Pancreas (tissue), 10 donors: ENCODE measurements at regions of chr22 and their contacts with region 1.

Region 1: GRCh38 chr22:19629720-19630419 is 84.4 kb upstream of the SEPTIN5 start:
- DNase-seq: peak; percentile 62 to 88 (median 80)
- ATAC-seq: peak; percentile 91 to 99 (median 98)
- H3K4me3 ChIP-seq: no peak overlapping the region
- H3K27ac ChIP-seq: no peak overlapping the region
- H3K4me1 ChIP-seq: no peaks in the 10 kb centered on the region
- H3K27me3 ChIP-seq: no peaks in the 10 kb centered on the region
- CTCF ChIP-seq: peak; percentile 69 to 90 (median 84)

Region 2: DNA sequence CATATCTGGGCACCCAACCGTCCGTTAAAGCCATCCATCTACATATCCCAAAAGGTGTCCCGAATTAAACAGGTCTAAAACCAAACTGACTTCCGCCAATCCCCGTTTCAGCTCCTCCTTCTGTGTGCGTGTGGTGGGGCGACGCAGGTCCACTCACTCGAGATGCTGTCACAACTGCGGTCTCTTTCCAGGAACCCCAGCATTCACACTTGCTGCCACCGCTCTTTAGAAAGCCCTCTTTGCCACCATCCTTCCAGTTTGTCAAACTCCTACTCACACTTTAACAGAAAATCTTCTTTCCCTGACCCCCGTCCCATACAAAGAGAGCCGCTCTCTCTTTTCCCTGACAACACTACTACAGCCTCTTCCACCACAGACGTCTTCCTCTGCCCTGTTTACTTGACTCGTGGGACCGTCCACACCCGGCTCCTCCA is 485.9 kb before region 1 on chr22:
- intact Hi-C with region 1: loop called in 1 of 3 experiments (anchors 10 kb)
- DNase-seq: peak in 1 of 6 donors; percentile 9
- ATAC-seq: peak in 2 of 4 donors; percentile 1 to 12
- H3K4me3 ChIP-seq: peak overlapping the region; percentile 55 to 94 (median 72)
- H3K27ac ChIP-seq: peak overlapping the region in 3 of 4 donors; percentile 0 to 19 (median 13)
- H3K4me1 ChIP-seq: peaks cover 0 to 6% (median 5%) of the 10 kb centered on the region in 3 donors
- H3K27me3 ChIP-seq: peaks cover 0 to 4% (median under 1%) of the 10 kb centered on the region in 4 donors
- CTCF ChIP-seq: no peak

Region 3: GRCh38 chr22:19304547-19304946 is 325.3 kb before region 1 on chr22:
- intact Hi-C with region 1: loop called in 1 of 3 experiments (anchors 10 kb)
- DNase-seq: no peak
- ATAC-seq: no peak
- H3K4me3 ChIP-seq: no peak overlapping the region
- H3K27ac ChIP-seq: no peak overlapping the region
- H3K4me1 ChIP-seq: no peaks in the 10 kb centered on the region
- H3K27me3 ChIP-seq: no peaks in the 10 kb centered on the region
- CTCF ChIP-seq: no peak

Region 4: DNA sequence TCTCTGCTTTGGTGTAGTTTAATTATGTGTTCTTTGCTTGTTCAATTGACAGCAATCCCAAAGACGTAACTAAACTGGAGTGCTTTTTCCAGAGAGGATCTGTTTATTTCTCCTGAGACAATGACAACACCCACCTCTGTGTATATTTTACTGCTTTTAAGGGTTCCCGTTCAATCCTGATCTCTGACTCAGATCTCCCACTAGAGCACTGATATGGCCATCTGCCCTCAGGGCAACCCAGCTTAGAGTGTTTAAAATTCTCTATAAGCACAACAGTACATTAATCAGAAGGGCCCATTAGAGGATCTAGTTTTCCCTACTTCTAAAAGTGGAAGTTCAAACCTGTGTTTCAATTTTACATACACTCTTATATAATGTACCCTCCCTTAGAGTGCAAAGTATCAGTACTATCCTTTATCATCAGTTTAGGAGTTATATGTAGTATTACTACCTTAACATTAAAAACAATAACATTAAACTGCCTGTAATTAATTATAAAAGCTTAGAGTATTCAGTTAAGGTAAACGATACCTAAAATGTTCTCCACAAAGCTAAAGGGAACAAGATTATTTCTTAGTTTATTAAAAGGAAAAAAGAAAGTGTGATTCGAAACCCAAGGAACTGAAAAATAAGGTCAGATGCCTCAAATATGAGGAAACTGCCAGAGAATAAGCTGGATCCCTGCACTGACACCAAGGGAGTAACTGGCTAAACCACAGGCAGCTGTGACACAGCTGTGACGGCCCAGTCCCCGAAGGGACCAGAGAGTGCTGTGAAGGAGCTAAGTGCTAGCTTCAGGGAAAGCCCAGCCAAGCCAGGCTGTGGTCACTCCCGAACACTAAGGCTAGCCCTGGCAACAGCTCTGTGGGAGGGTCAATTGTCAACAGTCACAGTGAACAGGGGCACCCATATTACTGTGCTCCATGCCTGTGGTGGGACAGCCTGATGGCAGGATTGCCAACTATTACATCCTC is 166.1 kb before region 1 on chr22:
- intact Hi-C with region 1: no loop called
- DNase-seq: no peak
- ATAC-seq: peak in 1 of 4 donors; percentile 27
- H3K4me3 ChIP-seq: no peak overlapping the region
- H3K27ac ChIP-seq: no peak overlapping the region
- H3K4me1 ChIP-seq: no peaks in the 10 kb centered on the region
- H3K27me3 ChIP-seq: no peaks in the 10 kb centered on the region
- CTCF ChIP-seq: no peak